Mammary epithelial cell (primary cell): ENCODE measurements at regions of chr12 and their contacts with region 1.

Region 1: DNA sequence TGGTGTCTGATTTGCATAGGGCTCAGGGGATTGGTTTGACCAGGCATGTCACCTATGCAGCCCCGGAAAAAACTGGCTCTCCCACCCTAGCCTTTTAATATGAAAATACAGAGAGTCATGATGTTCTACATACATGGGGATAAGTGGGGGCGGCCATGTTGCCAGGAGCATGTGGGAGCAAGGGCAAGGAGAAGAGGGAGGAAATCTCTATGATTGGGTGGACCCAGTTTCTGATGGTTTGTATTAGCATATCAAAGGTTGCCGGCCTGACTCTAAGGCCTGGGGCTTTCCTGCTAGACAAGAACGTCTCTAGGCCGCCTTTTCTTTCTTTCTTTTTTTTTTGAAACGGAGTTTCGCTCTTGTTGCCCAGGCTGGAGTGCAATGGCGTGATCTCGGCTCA is 123.4 kb upstream of the CPSF6 start:
- DNase-seq: no peak
- H3K4me3 ChIP-seq: no peak overlapping the region
- H3K27ac ChIP-seq: no peak overlapping the region
- H3K4me1 ChIP-seq: no peaks in the 10 kb centered on the region
- H3K27me3 ChIP-seq: peaks cover 4% of the 10 kb centered on the region
- CTCF ChIP-seq: no peak

Region 2: DNA sequence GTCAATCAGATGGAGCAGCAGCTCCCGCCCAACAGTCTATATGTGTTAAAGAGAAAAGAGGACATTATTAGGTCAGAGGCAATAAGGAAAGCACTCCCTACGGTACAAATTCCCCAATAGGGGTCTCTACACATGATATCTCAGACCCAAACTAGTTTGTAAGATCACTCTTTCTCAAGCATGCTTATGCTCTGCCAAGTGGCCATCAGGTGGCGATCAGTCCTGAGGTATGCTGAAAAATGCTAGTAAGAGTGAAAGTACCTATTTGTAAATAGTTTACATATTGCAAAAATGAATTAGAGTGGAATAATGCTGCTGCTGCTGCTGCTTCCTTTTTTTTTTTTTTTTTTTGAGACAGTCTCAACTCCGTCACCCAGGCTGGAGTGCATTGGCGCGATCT is 244.0 kb before region 1 on chr12:
- CTCF ChIA-PET with region 1: no interaction called
- dilution Hi-C with region 1: loop called (anchors 5 kb)
- in situ Hi-C with region 1: no loop called
- intact Hi-C with region 1: no loop called
- DNase-seq: no peak
- H3K4me3 ChIP-seq: no peak overlapping the region
- H3K27ac ChIP-seq: no peak overlapping the region
- H3K4me1 ChIP-seq: peaks cover 6% of the 10 kb centered on the region
- H3K27me3 ChIP-seq: no peaks in the 10 kb centered on the region
- CTCF ChIP-seq: peak; percentile 45 to 46

Region 3: DNA sequence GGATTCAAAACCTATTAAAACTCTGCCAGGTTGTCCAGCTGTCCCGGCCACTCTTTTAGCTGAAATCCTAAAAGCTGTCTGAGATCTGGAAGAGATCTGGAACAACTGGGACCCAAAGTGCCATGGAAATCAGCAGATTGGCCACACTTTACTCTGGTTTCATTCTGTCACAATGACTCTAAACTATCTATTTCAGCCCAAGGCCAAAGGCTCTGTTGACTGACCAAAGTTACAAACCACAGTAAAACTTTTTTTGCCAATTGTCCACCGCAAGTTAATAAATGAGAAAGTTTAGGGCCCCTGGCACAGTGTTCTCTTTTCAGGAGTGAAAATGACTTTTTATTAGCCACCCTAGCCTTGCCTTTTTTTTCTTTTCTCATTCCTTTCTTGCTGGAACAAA is 69.6 kb before region 1 on chr12:
- CTCF ChIA-PET with region 1: no interaction called
- dilution Hi-C with region 1: loop called (anchors 5 kb)
- in situ Hi-C with region 1: no loop called
- intact Hi-C with region 1: no loop called
- DNase-seq: no peak
- H3K4me3 ChIP-seq: no peak overlapping the region
- H3K27ac ChIP-seq: no peak overlapping the region
- H3K4me1 ChIP-seq: peaks cover 7% of the 10 kb centered on the region
- H3K27me3 ChIP-seq: no peaks in the 10 kb centered on the region
- CTCF ChIP-seq: no peak

Region 4: DNA sequence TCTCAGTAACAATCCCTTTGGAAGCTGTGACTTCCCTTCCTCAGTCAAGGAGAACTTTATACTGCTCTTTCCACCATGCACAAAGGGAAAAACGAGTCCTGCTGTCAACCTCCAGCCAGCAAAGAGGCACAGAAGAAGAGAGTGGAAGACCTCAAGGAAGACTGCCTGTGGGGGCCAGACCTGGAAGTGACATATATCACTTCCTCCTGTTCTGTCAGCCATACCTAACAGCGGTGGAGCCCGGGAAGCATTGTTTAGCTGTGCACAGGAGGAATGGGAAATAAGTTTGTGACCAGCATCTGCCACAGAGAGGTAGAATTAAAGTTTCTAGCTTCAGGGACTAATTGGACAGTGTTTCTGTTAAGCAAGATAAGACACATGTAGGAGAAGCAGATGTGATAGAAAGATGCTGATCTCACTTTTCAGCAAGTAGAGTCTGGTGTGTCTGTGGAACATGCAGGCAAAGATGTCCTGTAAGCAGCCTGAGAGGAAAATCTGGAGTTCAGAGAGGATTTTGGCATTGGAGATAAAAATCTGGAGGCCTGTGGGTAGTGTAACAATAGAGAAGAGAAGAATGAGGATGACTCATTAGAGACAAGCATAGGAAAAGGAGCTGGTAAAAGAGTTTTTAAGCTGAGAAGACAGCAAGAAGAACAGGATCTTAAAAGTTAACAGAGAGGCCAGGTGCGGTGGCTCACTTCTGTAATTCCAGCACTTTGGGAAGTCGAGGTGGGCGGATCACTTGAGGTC is 18.2 kb before region 1 on chr12:
- CTCF ChIA-PET with region 1: no interaction called
- dilution Hi-C with region 1: no loop called
- in situ Hi-C with region 1: no loop called
- intact Hi-C with region 1: no loop called
- DNase-seq: peak; percentile 32
- H3K4me3 ChIP-seq: no peak overlapping the region
- H3K27ac ChIP-seq: no peak overlapping the region
- H3K4me1 ChIP-seq: peaks cover 16% of the 10 kb centered on the region
- H3K27me3 ChIP-seq: peaks cover 3% of the 10 kb centered on the region
- CTCF ChIP-seq: no peak

Region 5: DNA sequence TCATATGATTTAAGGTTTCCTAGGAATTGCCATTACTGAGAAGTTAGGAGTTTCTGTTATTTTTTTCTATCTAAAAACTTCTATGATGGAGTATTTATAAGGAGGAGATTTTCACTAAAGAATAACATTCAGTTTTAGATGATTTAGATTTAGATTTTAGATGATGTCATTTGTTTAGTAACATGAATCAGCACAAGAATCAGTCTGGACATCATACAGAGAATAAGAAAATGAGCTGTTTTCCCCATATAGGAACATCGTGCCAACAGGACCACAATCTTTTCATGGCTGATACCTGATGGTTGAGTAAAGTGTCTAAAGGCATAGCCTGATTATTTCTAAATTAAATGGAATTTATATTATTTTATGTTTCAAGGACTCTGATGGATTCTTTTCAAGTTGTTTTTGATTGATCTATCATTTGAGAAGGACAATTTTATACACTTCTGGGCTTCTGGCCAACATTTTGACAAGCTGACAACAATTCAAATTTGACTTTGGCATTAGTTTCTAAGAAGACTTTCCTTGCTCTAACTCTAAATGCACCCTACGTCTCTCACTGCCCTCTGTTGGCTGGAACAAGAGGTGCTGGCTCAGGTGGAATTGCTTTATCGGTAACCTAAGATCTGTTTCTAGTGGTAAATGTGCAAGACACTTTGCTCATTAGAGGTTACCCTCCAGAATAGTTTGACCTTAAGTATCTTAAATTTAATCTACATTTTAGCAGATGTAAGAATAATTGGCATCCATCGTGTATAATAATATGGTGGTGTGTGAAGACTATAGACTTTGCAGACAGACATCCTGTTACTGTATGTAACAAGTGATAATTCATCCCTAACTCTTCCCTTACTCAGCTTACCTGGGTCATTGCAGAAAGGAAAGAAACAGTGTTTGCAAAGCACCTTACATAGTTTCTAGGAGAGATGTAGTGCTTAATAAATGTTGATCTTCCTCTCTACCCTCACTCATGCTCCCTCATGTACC is 80.6 kb after region 1 on chr12:
- CTCF ChIA-PET with region 1: no interaction called
- dilution Hi-C with region 1: loop called (anchors 5 kb)
- in situ Hi-C with region 1: no loop called
- intact Hi-C with region 1: no loop called
- DNase-seq: peak; percentile 5
- H3K4me3 ChIP-seq: no peak overlapping the region
- H3K27ac ChIP-seq: no peak overlapping the region
- H3K4me1 ChIP-seq: no peaks in the 10 kb centered on the region
- H3K27me3 ChIP-seq: no peaks in the 10 kb centered on the region
- CTCF ChIP-seq: peak; percentile 51 to 64